ENCODE measurements at regions of chr10 and their contacts with region 1.

Region 1: GRCh38 chr10:6108603-6109443 is 20.0 kb downstream of the RBM17 start:
- DNase-seq: no peak
- ATAC-seq: peak; percentile 84
- H3K4me3 Mint-ChIP-seq: no peak overlapping the region
- H3K27ac Mint-ChIP-seq: peak overlapping the region; percentile 65
- H3K4me1 Mint-ChIP-seq: peaks cover 12% of the 10 kb centered on the region
- H3K27me3 Mint-ChIP-seq: no peaks in the 10 kb centered on the region
- CTCF ChIP-seq: peak; percentile 88

Region 2: DNA sequence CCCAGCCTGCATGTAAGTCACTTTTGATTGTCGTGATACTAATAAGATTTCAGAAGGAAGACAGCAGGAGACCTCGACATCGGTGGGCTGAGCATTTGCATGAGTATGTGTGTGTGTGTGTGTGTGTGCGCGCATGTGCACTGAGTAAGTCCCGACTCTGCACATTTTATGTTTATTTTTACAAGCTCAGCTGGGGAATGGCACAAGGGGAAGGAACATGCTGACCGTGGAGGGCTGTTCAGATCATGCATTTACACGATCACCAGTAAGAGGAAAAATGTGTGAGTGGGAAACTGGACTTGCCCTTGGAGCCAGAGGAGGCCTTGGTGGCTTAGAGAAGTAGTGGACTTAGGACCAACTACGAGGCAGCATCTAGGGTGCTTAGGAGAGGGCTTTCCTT is 88.0 kb before region 1 on chr10:
- CTCF ChIA-PET with region 1: no interaction called
- POLR2A ChIA-PET with region 1: no interaction called
- intact Hi-C with region 1: no loop called
- DNase-seq: no peak
- ATAC-seq: no peak
- H3K4me3 Mint-ChIP-seq: no peak overlapping the region
- H3K27ac Mint-ChIP-seq: no peak overlapping the region
- H3K4me1 Mint-ChIP-seq: no peaks in the 10 kb centered on the region
- H3K27me3 Mint-ChIP-seq: no peaks in the 10 kb centered on the region
- CTCF ChIP-seq: no peak

Region 3: GRCh38 chr10:6050801-6051445 is 57.9 kb before region 1 on chr10:
- CTCF ChIA-PET with region 1: no interaction called
- POLR2A ChIA-PET with region 1: no interaction called
- intact Hi-C with region 1: no loop called
- DNase-seq: peak; percentile 79
- ATAC-seq: peak; percentile 66
- H3K4me3 Mint-ChIP-seq: peak overlapping the region; percentile 81
- H3K27ac Mint-ChIP-seq: peak overlapping the region; percentile 97
- H3K4me1 Mint-ChIP-seq: peaks cover 91% of the 10 kb centered on the region
- H3K27me3 Mint-ChIP-seq: no peaks in the 10 kb centered on the region
- CTCF ChIP-seq: no peak

Region 4: DNA sequence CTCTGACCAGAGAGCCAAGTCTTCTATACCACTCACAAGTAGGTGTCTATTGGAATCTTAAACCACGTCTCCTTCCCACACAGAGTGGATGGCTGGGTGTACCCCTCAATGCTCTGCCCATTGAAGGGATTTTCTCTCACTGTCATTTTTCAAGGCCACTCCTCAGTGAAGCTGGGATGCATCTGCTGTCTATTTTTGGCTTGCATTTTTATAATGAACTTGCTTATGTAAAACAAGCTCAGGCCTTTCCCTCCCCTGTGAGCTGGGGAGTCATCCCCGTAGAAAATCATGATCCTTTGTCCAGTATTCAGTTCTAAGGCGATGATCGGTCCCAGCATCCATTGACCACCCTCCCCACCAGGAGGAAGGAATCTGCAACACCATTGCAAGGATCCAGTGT is 29.8 kb before region 1 on chr10:
- CTCF ChIA-PET with region 1: no interaction called
- POLR2A ChIA-PET with region 1: no interaction called
- intact Hi-C with region 1: no loop called
- DNase-seq: no peak
- ATAC-seq: no peak
- H3K4me3 Mint-ChIP-seq: no peak overlapping the region
- H3K27ac Mint-ChIP-seq: no peak overlapping the region
- H3K4me1 Mint-ChIP-seq: peaks cover 15% of the 10 kb centered on the region
- H3K27me3 Mint-ChIP-seq: no peaks in the 10 kb centered on the region
- CTCF ChIP-seq: no peak

Region 5: GRCh38 chr10:6151087-6151977 is 42.5 kb after region 1 on chr10:
- CTCF ChIA-PET with region 1: interaction called, 3 read pairs
- POLR2A ChIA-PET with region 1: interaction called, 5 read pairs
- intact Hi-C with region 1: loop called (anchors 1 kb)
- DNase-seq: peak; percentile 53
- ATAC-seq: peak; percentile 83
- H3K4me3 Mint-ChIP-seq: peak overlapping the region; percentile 79
- H3K27ac Mint-ChIP-seq: peak overlapping the region; percentile 85
- H3K4me1 Mint-ChIP-seq: peaks cover 45% of the 10 kb centered on the region
- H3K27me3 Mint-ChIP-seq: no peaks in the 10 kb centered on the region
- CTCF ChIP-seq: no peak

Measured in activated B cell treated with CpG ODN at 0.5 μM for 24 hours (primary cell).